B cell (primary cell): ENCODE measurements at regions of chr2 and their contacts with region 1.

Region 1: GRCh38 chr2:23404426-23404825 is 19.4 kb downstream of the KLHL29 start:
- DNase-seq: peak; percentile 56
- ATAC-seq: peak; percentile 66
- H3K4me3 ChIP-seq: peak overlapping the region in 4 of 5 experiments; percentile 1 to 55 (median 31)
- H3K4me3 Mint-ChIP-seq: peak overlapping the region; percentile 80
- H3K27ac ChIP-seq: peak overlapping the region; percentile 11 to 60
- H3K27ac Mint-ChIP-seq: peak overlapping the region; percentile 86
- H3K4me1 ChIP-seq: peaks cover 16% of the 10 kb centered on the region in 2 donors
- H3K4me1 Mint-ChIP-seq: peaks cover 16% of the 10 kb centered on the region
- H3K27me3 ChIP-seq: no peaks in the 10 kb centered on the region
- H3K27me3 Mint-ChIP-seq: no peaks in the 10 kb centered on the region
- CTCF ChIP-seq: no peak

Region 2: GRCh38 chr2:23293063-23293462 is 111.4 kb before region 1 on chr2:
- CTCF ChIA-PET with region 1: no interaction called
- POLR2A ChIA-PET with region 1: no interaction called
- intact Hi-C with region 1: no loop called
- DNase-seq: no peak
- ATAC-seq: no peak
- H3K4me3 ChIP-seq: no peak overlapping the region
- H3K4me3 Mint-ChIP-seq: no peak overlapping the region
- H3K27ac ChIP-seq: no peak overlapping the region
- H3K27ac Mint-ChIP-seq: no peak overlapping the region
- H3K4me1 ChIP-seq: no peaks in the 10 kb centered on the region
- H3K4me1 Mint-ChIP-seq: no peaks in the 10 kb centered on the region
- H3K27me3 ChIP-seq: peaks cover 0 to 4% (median 0%) of the 10 kb centered on the region in 4 experiments
- H3K27me3 Mint-ChIP-seq: peaks cover 27% of the 10 kb centered on the region
- CTCF ChIP-seq: no peak

Region 3: GRCh38 chr2:23384551-23385349 is 19.7 kb before region 1 on chr2 and contains the start of gene KLHL29:
- CTCF ChIA-PET with region 1: interaction called, 4 read pairs
- POLR2A ChIA-PET with region 1: no interaction called
- intact Hi-C with region 1: loop called (anchors 2 kb)
- DNase-seq: peak; percentile 79
- ATAC-seq: peak; percentile 87
- H3K4me3 ChIP-seq: peak within 1 kb of the TSS in 4 of 5 experiments; percentile 37 to 63 (median 56)
- H3K4me3 Mint-ChIP-seq: peak within 1 kb of the TSS; percentile 92
- H3K27ac ChIP-seq: no peak within 1 kb of the TSS
- H3K27ac Mint-ChIP-seq: peak within 1 kb of the TSS; percentile 68
- H3K4me1 ChIP-seq: peaks cover 29 to 34% of the 10 kb centered on the region in 2 donors
- H3K4me1 Mint-ChIP-seq: peaks cover 30% of the 10 kb centered on the region
- H3K27me3 ChIP-seq: peaks cover 0 to 41% (median 24%) of the 10 kb centered on the region in 4 experiments
- H3K27me3 Mint-ChIP-seq: peaks cover 36% of the 10 kb centered on the region
- CTCF ChIP-seq: no peak
- total RNA-seq, gene KLHL29: 3.4 and 3.9 TPM in 2 replicates